Esophagus squamous epithelium (tissue), 5 donors: ENCODE measurements at regions of chr7 and their contacts with region 1.

Region 1: GRCh38 chr7:117119192-117119924 is 166.1 kb downstream of the ST7 start:
- DNase-seq: no peak
- H3K4me3 ChIP-seq: no peak overlapping the region
- H3K27ac ChIP-seq: no peak overlapping the region
- H3K4me1 ChIP-seq: peaks cover 0 to 7% (median under 1%) of the 10 kb centered on the region in 3 donors
- H3K27me3 ChIP-seq: no peaks in the 10 kb centered on the region
- CTCF ChIP-seq: peak; percentile 61 to 88 (median 81)
- POLR2A ChIP-seq: no peak

Region 2: DNA sequence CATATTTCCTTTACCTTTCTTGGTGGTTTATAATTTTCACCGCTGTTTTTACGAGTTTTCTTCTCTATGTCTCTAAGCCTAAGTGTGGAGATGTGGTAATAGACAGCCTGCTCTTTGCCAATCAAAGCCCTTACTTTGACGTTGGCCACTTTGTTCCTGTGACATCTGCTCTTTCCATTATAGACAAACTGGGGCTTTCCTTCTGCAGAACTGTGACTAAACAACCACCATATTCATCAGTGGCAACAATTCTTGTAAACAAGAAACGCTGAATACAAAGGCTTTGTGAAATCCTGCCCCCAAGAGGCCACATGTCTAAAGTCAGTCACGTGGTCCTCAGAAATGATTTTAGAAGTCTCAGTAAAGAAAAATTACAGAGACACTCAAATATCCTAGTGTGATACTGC is 316.6 kb before region 1 on chr7:
- intact Hi-C with region 1: no loop called
- DNase-seq: no peak
- H3K4me3 ChIP-seq: no peak overlapping the region
- H3K27ac ChIP-seq: peak overlapping the region in 1 of 4 donors; percentile 32
- H3K4me1 ChIP-seq: peaks cover 0 to 49% (median 17%) of the 10 kb centered on the region in 3 donors
- H3K27me3 ChIP-seq: no peaks in the 10 kb centered on the region
- CTCF ChIP-seq: peak in 5 of 6 experiments; percentile 38 to 74 (median 46)
- POLR2A ChIP-seq: no peak

Region 3: DNA sequence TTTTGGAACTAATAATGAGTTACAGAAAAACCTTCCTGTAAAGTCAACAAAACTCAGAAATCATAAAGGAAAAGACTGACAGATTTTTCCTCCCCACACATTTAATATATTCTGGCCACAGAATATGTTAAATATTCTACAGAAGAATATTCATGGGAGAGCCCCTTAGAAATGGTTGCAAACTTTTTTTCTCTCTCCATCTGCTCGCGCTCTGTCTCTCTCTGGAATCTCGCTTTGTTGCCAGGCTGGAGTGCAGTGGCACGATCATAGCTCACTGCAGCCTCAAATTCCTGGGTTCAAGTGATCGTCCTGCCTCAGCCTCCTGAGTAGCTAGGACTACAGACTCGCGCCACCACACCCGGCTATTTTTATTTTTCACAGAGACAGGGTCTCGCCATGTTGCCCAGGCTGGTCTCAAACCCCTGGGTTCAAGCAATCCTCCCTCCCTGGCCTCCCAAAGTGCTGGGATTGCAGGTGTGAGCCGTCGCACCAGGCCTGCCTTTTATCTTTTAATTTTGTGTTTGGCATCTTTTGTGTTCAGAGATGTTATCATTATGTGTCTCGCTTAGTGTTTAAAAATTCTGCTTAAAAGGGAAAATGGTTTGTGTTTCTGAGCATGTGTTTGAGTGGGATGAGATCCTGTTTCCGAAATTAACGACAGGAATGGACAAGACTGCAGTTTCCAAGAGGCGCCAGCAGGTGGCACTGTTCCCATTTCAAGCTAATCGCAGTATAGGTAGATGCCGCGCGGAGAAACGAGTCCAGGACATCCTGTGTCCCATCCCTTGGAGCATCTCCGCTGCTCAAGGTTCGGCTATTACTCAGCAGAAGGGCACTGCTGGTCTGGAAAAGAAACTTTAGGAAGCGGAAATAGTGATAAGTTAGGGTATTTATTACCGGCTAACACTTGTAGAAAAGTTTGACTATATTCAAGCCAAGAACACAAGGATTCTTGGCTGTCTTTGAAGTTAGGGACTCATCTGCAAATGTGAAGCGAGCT is 189.1 kb before region 1 on chr7:
- intact Hi-C with region 1: loop called (anchors 2 kb)
- DNase-seq: no peak
- H3K4me3 ChIP-seq: peak overlapping the region in 1 of 4 donors; percentile 19
- H3K27ac ChIP-seq: no peak overlapping the region
- H3K4me1 ChIP-seq: peaks cover 0 to 8% (median 2%) of the 10 kb centered on the region in 3 donors
- H3K27me3 ChIP-seq: peaks cover 0 to 6% (median 0%) of the 10 kb centered on the region in 4 donors
- CTCF ChIP-seq: peak; percentile 84 to 96 (median 92)
- POLR2A ChIP-seq: no peak

Region 4: GRCh38 chr7:116984917-116985316 is 134.4 kb before region 1 on chr7:
- intact Hi-C with region 1: loop called (anchors 5 kb)
- DNase-seq: no peak
- H3K4me3 ChIP-seq: no peak overlapping the region
- H3K27ac ChIP-seq: no peak overlapping the region
- H3K4me1 ChIP-seq: no peaks in the 10 kb centered on the region
- H3K27me3 ChIP-seq: no peaks in the 10 kb centered on the region
- CTCF ChIP-seq: peak; percentile 29 to 68 (median 55)
- POLR2A ChIP-seq: no peak

Region 5: GRCh38 chr7:117411539-117411938 is 292.2 kb after region 1 on chr7:
- intact Hi-C with region 1: no loop called
- DNase-seq: no peak
- H3K4me3 ChIP-seq: no peak overlapping the region
- H3K27ac ChIP-seq: no peak overlapping the region
- H3K4me1 ChIP-seq: no peaks in the 10 kb centered on the region
- H3K27me3 ChIP-seq: no peaks in the 10 kb centered on the region
- CTCF ChIP-seq: no peak
- POLR2A ChIP-seq: no peak